ENCODE measurements at regions of chr9 and their contacts with region 1.

Region 1: GRCh38 chr9:5886114-5886939 is 4.4 kb upstream of the MLANA start:
- DNase-seq: peak; percentile 89
- H3K4me3 Mint-ChIP-seq: no peak overlapping the region
- H3K27ac Mint-ChIP-seq: no peak overlapping the region
- H3K4me1 Mint-ChIP-seq: peaks cover 3% of the 10 kb centered on the region
- H3K27me3 Mint-ChIP-seq: no peaks in the 10 kb centered on the region

Region 2: GRCh38 chr9:5817869-5818268 is 68.5 kb before region 1 on chr9:
- CTCF ChIA-PET with region 1: no interaction called
- POLR2A ChIA-PET with region 1: no interaction called
- intact Hi-C with region 1: no loop called
- DNase-seq: no peak
- H3K4me3 Mint-ChIP-seq: no peak overlapping the region
- H3K27ac Mint-ChIP-seq: no peak overlapping the region
- H3K4me1 Mint-ChIP-seq: peaks cover 12% of the 10 kb centered on the region
- H3K27me3 Mint-ChIP-seq: no peaks in the 10 kb centered on the region

Region 3: DNA sequence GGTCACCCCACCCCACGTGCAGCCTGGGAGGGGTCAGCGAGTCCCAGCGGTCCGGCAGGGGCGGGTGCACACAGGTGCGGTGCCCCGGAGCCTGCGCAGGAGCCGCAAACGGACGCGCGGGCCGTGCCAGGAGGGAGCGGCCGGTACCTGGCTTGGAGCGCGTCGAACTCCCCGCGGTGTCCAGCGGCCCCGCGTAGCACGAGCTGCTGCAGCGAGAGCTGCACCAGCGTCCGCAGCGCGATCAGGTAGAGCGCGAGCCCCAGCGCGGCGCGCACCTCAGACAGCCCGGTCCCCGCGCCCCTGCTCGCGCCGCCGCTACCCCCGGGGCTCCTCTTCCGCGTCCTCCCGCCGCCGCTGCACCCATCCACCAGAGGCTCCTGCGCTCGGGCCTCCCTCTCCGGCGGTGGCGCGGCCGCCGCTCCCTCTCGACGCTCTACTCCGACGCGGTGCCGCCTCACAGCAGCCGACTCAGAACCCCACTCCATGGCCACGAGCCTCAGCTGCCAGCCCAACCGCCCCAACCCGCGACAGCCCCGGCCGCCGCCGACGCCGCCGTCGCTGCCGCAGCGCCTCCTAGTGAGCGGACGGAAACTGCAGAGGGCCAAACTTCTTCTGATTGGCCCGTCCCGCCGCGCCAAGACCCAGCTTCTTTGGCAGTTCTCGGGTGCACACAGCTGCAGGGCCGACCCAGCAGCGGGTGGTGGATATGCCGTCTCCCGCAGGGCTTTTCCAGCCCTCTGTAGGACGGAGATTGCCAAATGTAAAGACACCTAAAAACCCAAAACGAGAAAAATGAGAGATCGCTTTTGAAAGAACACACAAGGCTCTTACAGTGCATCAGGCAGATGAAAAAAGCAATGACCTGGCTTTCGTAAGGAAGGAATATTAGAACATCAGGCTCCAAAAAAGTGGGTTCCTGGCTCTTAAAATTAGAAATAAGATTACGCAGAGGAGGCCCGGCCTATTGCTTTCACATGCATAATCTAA is 53.5 kb before region 1 on chr9 and contains the start of gene ERMP1:
- CTCF ChIA-PET with region 1: interaction called, 22 read pairs
- POLR2A ChIA-PET with region 1: no interaction called
- intact Hi-C with region 1: no loop called
- DNase-seq: peak; percentile 94
- H3K4me3 Mint-ChIP-seq: peak within 1 kb of the TSS; percentile 86
- H3K27ac Mint-ChIP-seq: peak within 1 kb of the TSS; percentile 65
- H3K4me1 Mint-ChIP-seq: peaks cover 42% of the 10 kb centered on the region
- H3K27me3 Mint-ChIP-seq: no peaks in the 10 kb centered on the region
- total RNA-seq, gene ERMP1: 23.2 to 24.0 TPM

Region 4: GRCh38 chr9:5899292-5899691 is 13.0 kb after region 1 on chr9:
- CTCF ChIA-PET with region 1: interaction called, 45 read pairs
- POLR2A ChIA-PET with region 1: no interaction called
- intact Hi-C with region 1: no loop called
- DNase-seq: no peak
- H3K4me3 Mint-ChIP-seq: no peak overlapping the region
- H3K27ac Mint-ChIP-seq: no peak overlapping the region
- H3K4me1 Mint-ChIP-seq: peaks cover 19% of the 10 kb centered on the region
- H3K27me3 Mint-ChIP-seq: no peaks in the 10 kb centered on the region

Region 5: DNA sequence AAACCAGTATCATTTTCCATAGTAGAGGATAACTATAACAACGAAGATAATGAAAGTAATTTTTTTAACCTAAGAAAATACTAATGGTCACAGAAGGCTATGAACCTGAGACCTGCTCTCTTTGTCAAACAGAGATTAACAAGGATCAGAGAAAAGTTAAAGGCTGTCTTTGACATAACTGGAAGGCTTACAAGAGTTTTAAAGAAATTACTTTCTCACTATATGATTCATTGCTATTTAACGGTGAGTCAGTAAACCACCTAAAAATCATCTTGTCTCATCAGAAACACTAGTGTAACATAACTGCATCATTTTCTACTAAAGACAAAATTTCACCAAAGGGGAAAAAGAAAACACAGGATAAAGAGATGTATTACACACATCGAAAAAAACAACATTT is 23.6 kb after region 1 on chr9:
- CTCF ChIA-PET with region 1: no interaction called
- POLR2A ChIA-PET with region 1: no interaction called
- intact Hi-C with region 1: no loop called
- DNase-seq: no peak
- H3K4me3 Mint-ChIP-seq: no peak overlapping the region
- H3K27ac Mint-ChIP-seq: peak overlapping the region; percentile 86
- H3K4me1 Mint-ChIP-seq: peaks cover 25% of the 10 kb centered on the region
- H3K27me3 Mint-ChIP-seq: no peaks in the 10 kb centered on the region

Region 6: DNA sequence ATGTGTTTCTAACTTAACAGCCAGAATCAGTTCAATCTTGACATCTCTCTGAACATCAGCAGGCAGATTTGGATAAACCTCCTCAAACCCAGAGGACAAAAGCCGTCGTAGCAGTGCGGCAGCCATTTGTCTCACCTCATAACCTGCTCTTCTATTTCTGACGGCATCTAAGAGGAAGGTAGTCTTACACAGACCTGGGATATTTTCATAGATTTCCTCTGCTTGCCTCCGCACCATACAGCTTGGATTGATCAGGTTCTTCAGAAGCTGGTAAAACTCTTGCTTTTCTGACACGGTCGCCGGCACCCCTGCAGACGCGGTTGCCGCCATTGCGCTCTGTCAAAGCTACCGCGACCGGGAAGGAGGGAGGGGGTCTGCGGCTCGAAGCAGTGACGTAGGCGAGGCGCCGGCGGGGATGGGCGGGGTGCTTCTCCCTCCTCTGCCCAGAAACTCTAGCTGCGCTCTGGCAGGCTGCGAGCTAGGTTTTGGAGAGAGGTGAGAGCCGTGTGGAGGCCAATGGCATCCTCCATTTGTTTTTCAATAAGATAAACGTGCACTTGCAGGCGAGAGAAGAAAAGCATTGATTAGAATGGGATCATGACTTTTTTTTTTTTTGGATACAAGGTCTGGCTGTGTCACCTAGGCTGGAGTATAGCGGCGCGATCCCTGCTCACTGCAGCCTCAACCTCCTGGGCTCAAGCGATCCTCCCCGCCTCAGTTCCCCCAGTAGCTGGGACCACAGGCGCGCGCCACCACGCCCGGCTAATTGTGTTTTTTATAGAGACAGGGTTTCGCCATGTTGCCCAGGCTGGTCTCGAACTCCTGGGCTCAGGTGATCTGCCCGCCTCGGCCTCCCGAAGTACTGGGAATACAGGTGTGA is 129.2 kb after region 1 on chr9 and contains the start of gene RANBP6:
- CTCF ChIA-PET with region 1: interaction called, 11 read pairs
- POLR2A ChIA-PET with region 1: no interaction called
- intact Hi-C with region 1: no loop called
- DNase-seq: peak; percentile 96
- H3K4me3 Mint-ChIP-seq: peak within 1 kb of the TSS; percentile 96
- H3K27ac Mint-ChIP-seq: peak within 1 kb of the TSS; percentile 98
- H3K4me1 Mint-ChIP-seq: peaks cover 46% of the 10 kb centered on the region
- H3K27me3 Mint-ChIP-seq: no peaks in the 10 kb centered on the region
- total RNA-seq, gene RANBP6: 20.0 to 20.7 TPM

Region 7: DNA sequence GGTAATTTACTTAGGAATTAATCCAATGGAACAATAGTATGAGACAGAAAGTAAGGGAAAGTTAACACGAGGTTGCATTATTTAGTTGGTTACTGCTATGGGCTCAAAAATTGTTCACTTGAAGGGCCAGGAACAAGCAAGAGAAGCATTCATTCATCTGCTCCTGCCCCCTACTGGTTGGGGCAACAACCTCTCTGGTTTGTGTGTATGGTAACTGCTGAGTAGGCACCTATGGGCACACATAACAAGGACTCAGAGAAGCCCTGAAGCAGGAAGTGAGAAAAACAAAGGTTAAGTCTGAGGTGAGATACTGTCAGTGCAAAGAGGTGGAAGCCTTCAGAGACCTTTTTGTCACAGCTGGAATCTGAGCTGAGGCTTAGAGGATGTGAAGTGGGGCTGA is 163.5 kb after region 1 on chr9:
- CTCF ChIA-PET with region 1: interaction called, 166 read pairs
- POLR2A ChIA-PET with region 1: interaction called, 4 read pairs
- intact Hi-C with region 1: loop called (anchors 1 kb)
- DNase-seq: peak; percentile 74
- H3K4me3 Mint-ChIP-seq: no peak overlapping the region
- H3K27ac Mint-ChIP-seq: no peak overlapping the region
- H3K4me1 Mint-ChIP-seq: peaks cover 9% of the 10 kb centered on the region
- H3K27me3 Mint-ChIP-seq: peaks cover 9% of the 10 kb centered on the region

Region 8: DNA sequence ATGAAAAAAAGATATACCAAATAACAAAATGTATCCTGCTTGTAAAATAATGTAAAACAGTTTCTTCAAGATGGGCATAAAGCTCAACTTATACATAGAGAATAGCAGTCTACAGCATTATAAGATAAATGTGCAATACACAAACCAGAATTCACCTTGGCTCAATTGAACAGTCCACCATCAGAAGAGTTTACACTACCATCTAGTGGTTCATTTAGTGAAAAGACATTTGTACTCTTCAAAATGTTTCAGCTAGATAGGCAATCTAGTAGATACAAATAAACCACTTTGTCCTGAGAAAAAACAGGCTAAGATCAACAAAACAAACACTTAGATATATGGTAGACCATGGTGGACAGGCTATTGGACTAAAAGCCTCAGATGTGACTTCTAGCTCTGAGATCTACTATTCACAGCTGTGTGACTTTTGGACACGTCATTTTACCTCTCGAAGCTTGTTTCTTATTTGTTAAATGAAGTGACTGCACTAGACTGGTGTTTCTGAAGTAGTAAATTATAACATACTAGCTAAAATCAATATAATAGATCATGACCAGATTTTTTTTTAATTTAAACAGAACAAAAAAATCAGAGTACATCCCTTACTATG is 419.7 kb after region 1 on chr9:
- CTCF ChIA-PET with region 1: interaction called, 32 read pairs
- POLR2A ChIA-PET with region 1: no interaction called
- intact Hi-C with region 1: loop called (anchors 1 kb)
- DNase-seq: no peak
- H3K4me3 Mint-ChIP-seq: no peak overlapping the region
- H3K27ac Mint-ChIP-seq: no peak overlapping the region
- H3K4me1 Mint-ChIP-seq: no peaks in the 10 kb centered on the region
- H3K27me3 Mint-ChIP-seq: no peaks in the 10 kb centered on the region